ENCODE measurements at regions of chr1 and their contacts with region 1.

Region 1: DNA sequence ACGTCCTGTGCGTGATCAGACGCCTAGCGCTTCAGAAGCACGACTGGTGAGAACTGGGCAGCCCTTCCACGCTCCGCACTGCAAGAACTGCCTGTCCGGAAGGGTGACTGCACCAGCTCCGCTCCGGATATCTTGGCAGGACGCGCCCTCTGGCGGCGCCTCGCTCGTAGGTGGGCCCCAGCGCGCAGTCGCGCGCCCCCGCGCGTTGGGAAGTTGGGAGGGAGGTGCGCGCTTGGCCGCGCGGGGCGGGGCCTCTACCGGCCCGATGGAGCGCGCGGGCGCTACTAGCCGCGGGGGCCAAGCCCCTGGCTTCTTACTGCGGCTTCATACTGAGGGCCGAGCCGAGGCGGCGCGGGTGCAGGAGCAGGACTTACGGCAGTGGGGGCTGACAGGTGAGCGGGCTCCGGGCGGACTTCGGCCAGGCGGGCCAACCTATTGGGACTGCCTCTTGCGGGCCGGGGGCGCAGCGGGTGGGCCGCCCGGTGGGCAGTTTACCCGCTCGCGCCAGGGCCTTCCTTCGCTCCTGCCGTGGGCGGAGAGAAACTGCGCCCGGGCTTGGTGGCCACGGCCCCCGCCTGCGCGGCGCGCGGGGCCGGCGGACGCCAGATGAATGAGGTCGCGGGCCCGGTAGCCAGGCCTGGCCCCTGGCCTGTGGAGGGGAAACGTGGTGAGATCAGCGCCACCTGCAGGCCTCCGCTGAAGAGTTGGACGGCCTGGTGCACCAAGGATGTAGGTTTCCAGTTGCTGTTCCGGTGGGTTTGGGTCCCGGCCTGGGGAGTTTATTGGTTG is at the start of gene CHD1L:
- DNase-seq: peak; percentile 90
- H3K4me3 ChIP-seq: peak within 1 kb of the TSS; percentile 87
- H3K27ac ChIP-seq: peak within 1 kb of the TSS; percentile 73
- H3K27me3 ChIP-seq: peaks cover 3% of the 10 kb centered on the region
- CTCF ChIP-seq: peak; percentile 84
- polyA plus RNA-seq, gene CHD1L: 33.8 and 40.1 TPM in 2 replicates

Region 2: GRCh38 chr1:147167361-147167760 is 75.3 kb before region 1 on chr1:
- CTCF ChIA-PET with region 1: interaction called, 36 read pairs
- POLR2A ChIA-PET with region 1: interaction called, 3 read pairs
- DNase-seq: peak; percentile 76
- H3K4me3 ChIP-seq: no peak overlapping the region
- H3K27ac ChIP-seq: peak overlapping the region; percentile 90
- H3K27me3 ChIP-seq: no peaks in the 10 kb centered on the region
- CTCF ChIP-seq: no peak

Region 3: DNA sequence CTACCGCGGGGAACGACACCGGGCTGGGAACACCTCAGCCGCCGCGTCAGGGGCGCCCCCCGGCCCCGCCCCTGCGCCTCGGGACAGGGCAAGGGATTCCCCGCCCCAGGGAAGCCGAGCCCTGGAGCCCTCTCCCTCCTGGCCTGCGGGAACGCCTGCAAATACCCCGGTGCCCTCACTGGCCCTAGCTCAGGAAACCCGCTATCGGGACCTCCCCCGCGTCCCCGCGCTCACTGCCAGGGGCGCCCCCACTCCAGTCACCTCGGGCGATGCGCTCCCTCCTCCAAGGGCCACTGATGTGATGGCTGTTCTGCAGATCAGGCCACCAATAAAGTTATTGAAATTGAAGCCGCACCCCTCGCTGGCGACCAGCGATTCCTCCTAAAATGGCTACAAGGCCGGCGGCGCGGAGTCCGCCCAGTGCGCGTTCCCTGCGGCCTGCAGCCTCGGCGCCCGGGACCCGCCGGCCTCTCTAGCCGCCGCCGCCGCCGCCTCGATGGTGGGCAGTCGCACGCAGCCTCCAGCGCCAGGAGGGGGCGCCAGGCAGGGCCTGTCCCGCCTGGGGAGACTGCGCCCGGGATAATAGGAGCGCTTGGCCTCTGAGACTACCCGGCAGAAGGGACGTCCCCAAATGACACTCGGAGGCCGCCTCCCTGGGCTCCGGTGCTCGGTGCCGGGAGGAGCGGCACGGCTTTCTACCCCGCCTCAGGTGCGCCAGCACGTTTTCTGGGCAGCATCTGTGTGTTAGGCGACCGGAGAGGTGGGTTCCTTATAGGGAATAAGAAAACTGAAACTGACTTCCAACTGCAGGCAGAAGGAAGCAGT is 70.3 kb before region 1 on chr1 and contains the start of gene PRKAB2:
- CTCF ChIA-PET with region 1: interaction called, 36 read pairs
- POLR2A ChIA-PET with region 1: interaction called, 4 read pairs
- DNase-seq: peak; percentile 91
- H3K4me3 ChIP-seq: peak within 1 kb of the TSS; percentile 93
- H3K27ac ChIP-seq: peak within 1 kb of the TSS; percentile 94
- H3K27me3 ChIP-seq: no peaks in the 10 kb centered on the region
- CTCF ChIP-seq: peak; percentile 74
- polyA plus RNA-seq, gene PRKAB2: 19.1 and 28.1 TPM in 2 replicates

Region 4: GRCh38 chr1:147225193-147225730 is 17.4 kb before region 1 on chr1 and contains the start of gene FMO5:
- CTCF ChIA-PET with region 1: interaction called, 14 read pairs
- POLR2A ChIA-PET with region 1: no interaction called
- DNase-seq: peak; percentile 45
- H3K4me3 ChIP-seq: peak within 1 kb of the TSS; percentile 73
- H3K27ac ChIP-seq: peak within 1 kb of the TSS; percentile 11
- H3K27me3 ChIP-seq: no peaks in the 10 kb centered on the region
- CTCF ChIP-seq: peak; percentile 29; the same call in 1 of the 2 replicates
- polyA plus RNA-seq, gene FMO5: 0.98 and 1.2 TPM in 2 replicates

Region 5: GRCh38 chr1:147264158-147264768 is 21.6 kb after region 1 on chr1:
- CTCF ChIA-PET with region 1: interaction called, 11 read pairs
- POLR2A ChIA-PET with region 1: no interaction called
- DNase-seq: peak; percentile 23
- H3K4me3 ChIP-seq: no peak overlapping the region
- H3K27ac ChIP-seq: no peak overlapping the region
- H3K27me3 ChIP-seq: no peaks in the 10 kb centered on the region
- CTCF ChIP-seq: no peak

Region 6: DNA sequence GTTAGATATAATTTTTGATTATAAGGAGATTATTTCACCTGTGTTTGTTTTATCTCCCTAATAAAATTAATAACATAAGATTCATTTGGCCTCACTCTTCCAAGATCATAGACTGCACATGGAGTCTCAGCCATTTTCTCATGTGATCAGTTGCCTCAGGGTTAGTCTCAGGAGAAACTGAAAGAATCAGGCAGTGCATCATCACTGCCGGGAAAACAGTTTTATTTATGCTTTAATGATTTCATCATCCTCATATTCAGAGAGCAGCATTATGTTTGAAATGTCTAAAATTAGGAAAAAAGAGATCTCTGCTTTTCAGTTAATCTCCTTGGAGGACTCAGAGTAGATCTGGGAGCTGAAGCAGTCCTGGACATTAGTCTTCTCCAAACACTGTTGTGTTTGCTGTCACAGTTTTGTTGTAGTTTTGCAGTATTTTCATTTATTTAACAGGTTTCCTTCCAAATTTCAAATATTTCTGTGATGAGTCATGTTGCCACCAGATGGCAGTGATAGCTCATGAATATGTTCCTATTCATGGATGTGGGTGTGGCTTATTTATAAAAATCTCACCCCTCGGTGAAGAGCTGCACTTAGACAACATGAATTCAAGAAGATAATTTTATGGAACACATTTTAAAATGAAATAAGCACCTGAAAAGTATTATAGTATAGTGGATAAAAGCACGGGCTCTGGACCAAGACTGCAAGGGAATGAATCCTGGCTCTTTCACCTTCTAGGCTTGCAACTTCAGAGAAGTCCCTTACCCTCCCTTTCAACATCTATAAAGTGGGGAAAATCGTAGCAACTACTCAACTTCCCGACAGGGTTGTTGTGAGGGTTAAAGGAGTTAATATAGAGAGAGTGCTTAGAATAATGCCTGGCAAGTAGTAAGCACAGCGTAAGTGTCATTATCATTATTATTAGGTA is 31.0 kb after region 1 on chr1:
- CTCF ChIA-PET with region 1: interaction called, 31 read pairs
- POLR2A ChIA-PET with region 1: no interaction called
- DNase-seq: peak; percentile 65
- H3K4me3 ChIP-seq: peak overlapping the region; percentile 22
- H3K27ac ChIP-seq: peak overlapping the region; percentile 87
- H3K27me3 ChIP-seq: no peaks in the 10 kb centered on the region
- CTCF ChIP-seq: peak; percentile 44

Region 7: DNA sequence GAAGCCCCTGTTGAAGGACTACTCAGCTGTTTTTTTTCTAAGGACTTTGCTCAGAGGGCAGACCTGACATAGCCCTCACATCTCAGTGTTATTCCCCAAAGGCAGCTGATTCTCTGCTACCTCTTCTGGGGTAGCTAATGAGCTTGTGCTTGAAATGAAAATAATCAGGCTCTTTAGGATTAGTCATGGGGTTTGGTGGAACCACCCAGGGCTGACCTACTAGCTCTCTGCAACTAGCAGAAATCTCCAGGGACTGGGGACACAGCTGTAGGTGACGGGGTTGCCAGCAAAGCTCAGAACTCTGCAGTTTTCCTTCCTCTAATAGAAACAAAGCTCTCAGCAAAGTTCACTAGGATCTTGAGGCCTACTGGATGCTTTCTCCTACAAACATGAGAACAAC is 192.3 kb after region 1 on chr1:
- CTCF ChIA-PET with region 1: no interaction called
- POLR2A ChIA-PET with region 1: no interaction called
- DNase-seq: no peak
- H3K4me3 ChIP-seq: no peak overlapping the region
- H3K27ac ChIP-seq: no peak overlapping the region
- H3K27me3 ChIP-seq: no peaks in the 10 kb centered on the region
- CTCF ChIP-seq: no peak

Measured in AG04450 (cell line).